K562 (cell line): ENCODE measurements at regions of chr20 and their contacts with region 1.

Region 1: GRCh38 chr20:34312544-34313217 is 9.5 kb upstream of the AHCY start:
- DNase-seq: peak; percentile 83 to 93 (median 84)
- ATAC-seq: peak; percentile 99
- H3K4me3 ChIP-seq: peak overlapping the region; percentile 14
- H3K27ac ChIP-seq: no peak overlapping the region
- H3K4me1 ChIP-seq: peaks cover 13 to 20% of the 10 kb centered on the region in 2 experiments; a peak in 4 of 5 replicates
- H3K27me3 ChIP-seq: no peaks in the 10 kb centered on the region
- CTCF ChIP-seq: peak; percentile 100
- EP300 ChIP-seq: no peak
- POLR2A ChIP-seq: no peak
- RAD21 ChIP-seq: peak; percentile 100

Region 2: DNA sequence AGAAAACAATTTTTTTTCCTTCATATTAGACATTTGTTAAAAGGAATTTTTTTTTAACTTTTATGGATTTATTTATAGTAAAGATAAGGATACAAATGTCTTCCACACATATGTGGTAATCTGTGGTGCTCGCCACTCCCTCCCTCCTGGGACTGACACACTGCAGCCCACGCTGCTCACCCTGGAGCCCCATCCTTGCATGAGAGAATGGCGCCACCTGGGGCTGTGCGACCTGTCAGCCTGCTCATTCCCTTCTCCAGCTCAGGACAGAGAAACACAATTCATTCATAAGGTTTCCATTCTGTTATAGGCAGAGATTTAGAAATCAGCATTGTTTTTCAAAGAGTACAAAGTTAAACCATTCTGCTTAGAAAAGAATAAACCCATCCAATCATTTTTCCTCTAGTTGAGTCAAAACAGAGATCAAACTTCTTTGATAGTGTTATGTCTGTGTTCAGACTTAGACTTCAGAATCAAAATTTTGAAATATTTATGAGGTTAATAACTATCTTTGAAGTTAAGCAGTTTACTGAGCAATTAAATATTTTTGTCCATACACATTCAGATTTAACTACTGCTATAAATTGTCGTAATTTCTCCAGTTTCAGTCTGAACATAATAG is 160.7 kb after region 1 on chr20:
- CTCF ChIA-PET with region 1: interaction called, 39 read pairs
- POLR2A ChIA-PET with region 1: interaction called, 6 read pairs
- in situ Hi-C with region 1: no loop called
- intact Hi-C with region 1: loop called (anchors 1 kb)
- DNase-seq: peak; percentile 32 to 68 (median 44)
- ATAC-seq: peak; percentile 99
- H3K4me3 ChIP-seq: no peak overlapping the region
- H3K27ac ChIP-seq: no peak overlapping the region
- H3K4me1 ChIP-seq: peaks cover 0 to 4% of the 10 kb centered on the region in 2 experiments; a peak in 4 of 5 replicates
- H3K27me3 ChIP-seq: no peaks in the 10 kb centered on the region
- CTCF ChIP-seq: peak; percentile 53 to 66 (median 65)
- EP300 ChIP-seq: no peak
- POLR2A ChIP-seq: no peak
- RAD21 ChIP-seq: peak; percentile 69 to 84

Region 3: DNA sequence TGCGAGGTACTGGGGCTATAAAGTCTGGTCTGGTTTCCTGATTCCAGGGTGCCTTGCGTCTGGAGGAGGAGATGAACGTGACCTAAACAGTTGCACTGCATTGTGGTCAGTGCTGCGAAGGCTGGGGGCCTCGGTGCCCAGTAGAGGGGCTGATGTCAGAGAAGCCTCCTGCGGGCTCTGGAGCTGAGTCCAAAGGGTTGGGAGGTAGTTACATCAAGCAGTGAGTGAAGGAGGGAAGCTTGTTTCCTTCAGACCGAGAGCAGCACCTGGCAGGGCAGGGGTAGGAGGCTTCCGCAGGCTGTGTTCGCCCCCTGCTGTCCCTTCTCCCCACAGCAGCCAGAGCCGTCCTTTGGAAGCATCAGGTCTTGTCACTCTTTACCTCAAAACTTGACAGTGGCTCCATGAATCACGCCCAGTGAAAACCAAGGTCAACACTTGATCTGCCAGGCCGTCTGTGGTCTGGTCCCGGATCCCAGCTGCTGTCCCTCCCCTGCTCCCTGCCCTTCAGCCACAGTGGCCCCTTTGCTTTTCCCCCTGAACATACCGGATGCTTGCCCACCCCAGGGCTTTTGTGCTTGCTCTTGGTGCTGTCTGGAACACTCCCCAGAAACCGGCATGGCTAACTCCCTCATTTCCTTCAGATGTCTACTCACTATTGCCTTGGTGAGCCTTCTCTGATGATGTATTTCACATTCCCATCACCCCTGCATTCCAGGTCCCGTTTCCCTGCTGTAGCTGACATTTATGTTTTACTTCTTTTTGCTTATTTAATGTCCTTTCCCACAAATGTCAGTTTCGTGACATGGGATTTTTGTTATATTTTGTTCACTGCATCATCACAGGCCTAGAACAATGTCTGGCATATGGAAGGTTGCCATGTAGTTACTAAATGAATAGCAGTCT is 210.5 kb after region 1 on chr20:
- CTCF ChIA-PET with region 1: interaction called, 33 read pairs
- POLR2A ChIA-PET with region 1: interaction called, 5 read pairs
- in situ Hi-C with region 1: no loop called
- intact Hi-C with region 1: loop called (anchors 1 kb)
- DNase-seq: peak; percentile 37 to 70 (median 60)
- ATAC-seq: peak; percentile 99
- H3K4me3 ChIP-seq: no peak overlapping the region
- H3K27ac ChIP-seq: no peak overlapping the region
- H3K4me1 ChIP-seq: peaks cover 15 to 17% of the 10 kb centered on the region in 2 experiments
- H3K27me3 ChIP-seq: no peaks in the 10 kb centered on the region
- CTCF ChIP-seq: peak; percentile 84 to 85 (median 85)
- EP300 ChIP-seq: no peak
- POLR2A ChIP-seq: no peak
- RAD21 ChIP-seq: peak; percentile 51 to 89

Region 4: GRCh38 chr20:34704177-34705007 is 391.7 kb after region 1 on chr20 and contains the start of gene TP53INP2:
- CTCF ChIA-PET with region 1: interaction called, 4 read pairs
- POLR2A ChIA-PET with region 1: interaction called, 4 read pairs
- in situ Hi-C with region 1: loop called (anchors 10 kb)
- intact Hi-C with region 1: loop called (anchors 2 kb)
- DNase-seq: peak; percentile 95 to 96 (median 95)
- ATAC-seq: peak; percentile 76
- H3K4me3 ChIP-seq: peak within 1 kb of the TSS; percentile 92
- H3K27ac ChIP-seq: peak within 1 kb of the TSS; percentile 92
- H3K4me1 ChIP-seq: peaks cover 16 to 28% of the 10 kb centered on the region in 2 experiments
- H3K27me3 ChIP-seq: no peaks in the 10 kb centered on the region
- CTCF ChIP-seq: no peak
- EP300 ChIP-seq: no peak
- POLR2A ChIP-seq: 0 out of 2 replicates have a peak, but pooled peaks have one; percentile 42
- RAD21 ChIP-seq: no peak
- polyA plus RNA-seq, gene TP53INP2: 1.0 to 1.1 TPM

Region 5: DNA sequence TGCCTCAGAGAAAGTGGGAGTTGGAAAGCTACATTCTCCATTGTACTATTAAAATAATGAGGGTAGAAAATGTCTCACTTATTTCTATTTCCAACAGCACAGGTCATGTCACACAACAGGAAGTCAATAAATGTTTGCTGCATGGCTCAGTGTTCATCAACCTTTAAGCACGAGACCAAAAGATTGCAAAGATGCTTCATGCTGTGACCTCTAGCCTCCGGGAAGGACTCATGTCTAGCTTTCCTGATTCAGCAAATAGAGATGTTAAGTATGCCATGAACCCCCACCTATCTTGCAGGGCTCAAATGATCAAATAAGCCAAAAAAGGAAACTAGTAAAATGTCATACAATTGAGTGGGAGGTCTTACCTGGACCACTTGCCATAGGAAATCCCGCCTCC is 455.4 kb after region 1 on chr20:
- CTCF ChIA-PET with region 1: interaction called, 11 read pairs
- POLR2A ChIA-PET with region 1: no interaction called
- in situ Hi-C with region 1: no loop called
- intact Hi-C with region 1: loop called (anchors 2 kb)
- DNase-seq: no peak
- ATAC-seq: no peak
- H3K4me3 ChIP-seq: no peak overlapping the region
- H3K27ac ChIP-seq: no peak overlapping the region
- H3K4me1 ChIP-seq: peaks cover 0 to 3% of the 10 kb centered on the region in 2 experiments; a peak in 2 of 5 replicates
- H3K27me3 ChIP-seq: no peaks in the 10 kb centered on the region
- CTCF ChIP-seq: no peak
- EP300 ChIP-seq: no peak
- POLR2A ChIP-seq: no peak
- RAD21 ChIP-seq: no peak